ENCODE measurements at regions of chr3 and their contacts with region 1.

Region 1: DNA sequence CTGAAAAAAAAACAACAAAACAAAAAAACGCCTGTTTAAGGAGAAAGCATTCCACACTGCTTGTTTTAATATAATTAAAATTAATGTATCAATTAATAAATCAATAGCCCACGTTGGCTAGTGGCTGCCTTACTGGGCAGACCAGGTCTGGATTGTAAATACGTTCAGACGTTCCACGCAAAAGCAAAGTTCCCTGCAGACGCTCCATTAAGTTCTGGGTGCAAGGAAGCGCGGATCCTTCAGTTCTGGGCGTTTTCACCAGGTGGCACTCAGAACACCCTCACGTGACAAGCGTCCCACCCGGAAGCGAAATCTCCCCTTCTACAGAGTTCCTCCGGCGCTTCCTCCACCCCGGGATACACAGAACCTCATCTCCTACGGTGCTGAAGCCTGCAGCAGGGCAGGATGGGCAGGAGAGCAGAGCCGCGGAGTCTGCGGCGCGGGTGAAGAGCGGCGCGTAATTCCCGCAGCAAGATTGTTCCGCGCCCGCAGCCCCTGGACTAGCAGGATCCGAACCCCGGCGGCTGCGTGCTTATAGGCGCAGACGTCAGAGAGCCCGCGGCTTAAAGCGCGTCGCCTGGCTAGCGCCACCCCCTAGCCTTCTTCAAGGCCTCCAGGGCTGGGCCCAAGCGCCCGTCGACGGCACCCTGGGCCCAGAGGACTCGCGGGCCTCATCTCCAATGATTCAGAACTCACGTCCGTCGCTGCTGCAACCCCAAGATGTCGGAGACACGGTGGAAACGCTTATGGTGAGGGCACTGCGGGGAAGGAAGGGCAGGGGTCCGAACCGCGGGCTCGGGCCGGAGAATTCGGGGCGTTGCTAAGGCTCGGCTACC is at the start of gene SLC25A38:
- DNase-seq: peak; percentile 92
- H3K4me3 ChIP-seq: peak within 1 kb of the TSS; percentile 76
- H3K27ac ChIP-seq: peak within 1 kb of the TSS; percentile 73
- H3K4me1 ChIP-seq: peaks cover 42% of the 10 kb centered on the region
- CTCF ChIP-seq: peak; percentile 62
- total RNA-seq, gene SLC25A38: 22.8 and 32.6 TPM in 2 replicates

Region 2: GRCh38 chr3:39051647-39052561 is 331.4 kb before region 1 on chr3 and contains the starts of genes SCN11A and WDR48:
- CTCF ChIA-PET with region 1: no interaction called
- POLR2A ChIA-PET with region 1: no interaction called
- intact Hi-C with region 1: loop called (anchors 10 kb)
- DNase-seq: peak; percentile 95
- H3K4me3 ChIP-seq: peak within 1 kb of the TSS; percentile 87
- H3K27ac ChIP-seq: peak within 1 kb of the TSS; percentile 58
- H3K4me1 ChIP-seq: peaks cover 21% of the 10 kb centered on the region
- CTCF ChIP-seq: no peak
- total RNA-seq, gene SCN11A: 0.25 TPM in 1 of 2 replicates, not detected in the other
- total RNA-seq, gene WDR48: 12.3 and 15.7 TPM in 2 replicates

Region 3: GRCh38 chr3:39260957-39261356 is 122.3 kb before region 1 on chr3:
- CTCF ChIA-PET with region 1: no interaction called
- POLR2A ChIA-PET with region 1: no interaction called
- intact Hi-C with region 1: no loop called
- DNase-seq: peak; percentile 65
- H3K4me3 ChIP-seq: no peak overlapping the region
- H3K27ac ChIP-seq: no peak overlapping the region
- H3K4me1 ChIP-seq: peaks cover 32% of the 10 kb centered on the region
- CTCF ChIP-seq: peak; percentile 58

Region 4: GRCh38 chr3:39434574-39434973 is 51.3 kb after region 1 on chr3:
- CTCF ChIA-PET with region 1: no interaction called
- POLR2A ChIA-PET with region 1: no interaction called
- intact Hi-C with region 1: no loop called
- DNase-seq: no peak
- H3K4me3 ChIP-seq: no peak overlapping the region
- H3K27ac ChIP-seq: no peak overlapping the region
- H3K4me1 ChIP-seq: no peaks in the 10 kb centered on the region
- CTCF ChIP-seq: no peak

Measured in OCI-LY7 (cell line).